ENCODE measurements at regions of chr12 and their contacts with region 1.

Region 1: DNA sequence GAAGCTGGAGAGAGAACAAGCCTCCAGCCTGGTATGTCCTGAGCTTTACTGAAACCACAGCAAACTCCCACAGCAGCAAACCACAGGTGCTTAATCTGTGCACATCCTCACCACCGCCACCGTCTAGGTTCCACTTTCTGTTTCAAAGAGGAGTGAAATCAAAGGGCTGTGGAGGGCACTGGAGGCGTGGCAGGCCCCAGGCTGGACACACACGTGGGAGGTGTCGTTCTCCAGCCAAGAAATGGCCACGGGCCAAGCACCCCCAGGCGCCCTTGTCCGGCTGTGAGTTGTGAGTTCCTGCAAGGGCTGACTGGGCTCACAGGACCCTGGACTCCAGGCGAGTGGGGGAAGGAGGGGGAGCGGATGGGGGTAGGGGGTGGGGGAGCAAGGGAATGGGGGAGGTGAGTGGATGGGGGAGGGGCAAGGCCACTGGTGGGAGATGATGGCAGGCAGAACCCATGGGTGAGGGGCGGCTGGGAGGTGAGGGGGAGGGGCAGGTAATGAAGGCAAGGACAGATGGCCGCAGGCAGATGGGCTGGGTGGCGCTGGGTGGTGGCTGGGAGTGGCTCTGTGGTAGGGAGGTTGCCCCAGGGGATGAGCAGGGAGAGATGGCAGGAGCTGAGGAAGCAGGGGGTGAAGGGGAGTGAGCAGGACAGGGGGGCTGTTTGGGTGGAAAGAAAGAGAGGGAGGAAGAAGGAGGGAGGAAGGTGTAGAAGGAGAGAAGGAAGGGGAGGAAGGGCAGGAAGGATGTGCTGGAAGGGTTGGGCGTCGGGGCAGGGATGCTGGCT is 86.7 kb downstream of the NCOR2 start:
- DNase-seq: peak; percentile 87
- ATAC-seq: peak; percentile 84
- H3K4me3 ChIP-seq: peak overlapping the region; percentile 44; the same call in 1 of the 2 replicates
- H3K27ac ChIP-seq: peak overlapping the region; percentile 50
- H3K4me1 ChIP-seq: peaks cover 18% of the 10 kb centered on the region
- H3K27me3 ChIP-seq: no peaks in the 10 kb centered on the region
- CTCF ChIP-seq: no peak

Region 2: DNA sequence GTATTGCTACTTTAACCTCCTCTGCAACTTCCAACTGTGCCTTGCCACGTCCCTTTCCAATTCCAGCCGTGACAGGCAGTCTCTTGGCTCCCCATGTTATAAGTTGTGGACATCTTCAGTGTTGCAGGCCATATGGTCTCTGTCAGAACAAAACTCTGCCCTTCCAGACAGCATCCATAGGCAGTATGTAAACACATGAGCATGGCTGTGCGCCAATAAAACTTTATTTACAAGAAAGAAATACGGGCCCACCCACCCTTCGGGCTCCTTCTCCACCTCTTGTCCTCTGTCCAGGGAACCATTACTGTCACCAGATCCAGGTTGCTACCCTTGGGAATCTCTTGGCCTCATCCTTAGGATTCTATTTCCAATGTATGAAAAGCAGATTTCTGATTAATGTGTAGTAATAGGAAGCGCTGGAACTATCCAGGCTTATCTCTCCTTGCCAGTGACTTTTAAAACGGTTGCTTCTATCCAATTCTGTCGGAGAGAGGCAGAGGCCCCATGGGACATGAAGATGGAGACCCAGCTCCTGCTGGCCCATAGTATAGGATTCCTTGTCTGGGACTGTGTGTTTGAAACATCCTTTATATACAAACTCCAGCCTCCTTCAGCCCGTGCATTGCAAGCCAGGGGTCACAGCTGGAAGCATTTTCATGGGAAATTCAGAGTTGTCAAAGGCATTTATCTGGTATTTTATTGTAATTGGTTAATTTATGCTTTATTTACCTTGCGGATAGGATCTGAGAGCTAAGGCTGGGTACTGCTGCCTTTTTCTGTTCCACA is 393.2 kb before region 1 on chr12:
- CTCF ChIA-PET with region 1: no interaction called
- POLR2A ChIA-PET with region 1: interaction called, 25 read pairs
- intact Hi-C with region 1: no loop called
- DNase-seq: no peak
- ATAC-seq: no peak
- H3K4me3 ChIP-seq: no peak overlapping the region
- H3K27ac ChIP-seq: no peak overlapping the region
- H3K4me1 ChIP-seq: no peaks in the 10 kb centered on the region
- H3K27me3 ChIP-seq: no peaks in the 10 kb centered on the region
- CTCF ChIP-seq: no peak

Measured in PC-3 (cell line).